Testis (tissue), 5 donors: ENCODE measurements at regions of chr16 and their contacts with region 1.

Region 1: GRCh38 chr16:67159593-67160406 is at the starts of genes FBXL8 and TRADD:
- DNase-seq: peak; percentile 74
- H3K4me3 ChIP-seq: peak within 1 kb of the TSS; percentile 75 to 87
- H3K27ac ChIP-seq: peak within 1 kb of the TSS; percentile 56 to 65
- H3K4me1 ChIP-seq: peaks cover 18% of the 10 kb centered on the region
- H3K27me3 ChIP-seq: no peaks in the 10 kb centered on the region
- CTCF ChIP-seq: peak in 2 of 3 experiments; percentile 20 to 46
- POLR2A ChIP-seq: no peak
- total RNA-seq, gene FBXL8: 20.6 to 26.9 TPM
- total RNA-seq, gene TRADD: 15.9 to 23.9 TPM

Region 2: DNA sequence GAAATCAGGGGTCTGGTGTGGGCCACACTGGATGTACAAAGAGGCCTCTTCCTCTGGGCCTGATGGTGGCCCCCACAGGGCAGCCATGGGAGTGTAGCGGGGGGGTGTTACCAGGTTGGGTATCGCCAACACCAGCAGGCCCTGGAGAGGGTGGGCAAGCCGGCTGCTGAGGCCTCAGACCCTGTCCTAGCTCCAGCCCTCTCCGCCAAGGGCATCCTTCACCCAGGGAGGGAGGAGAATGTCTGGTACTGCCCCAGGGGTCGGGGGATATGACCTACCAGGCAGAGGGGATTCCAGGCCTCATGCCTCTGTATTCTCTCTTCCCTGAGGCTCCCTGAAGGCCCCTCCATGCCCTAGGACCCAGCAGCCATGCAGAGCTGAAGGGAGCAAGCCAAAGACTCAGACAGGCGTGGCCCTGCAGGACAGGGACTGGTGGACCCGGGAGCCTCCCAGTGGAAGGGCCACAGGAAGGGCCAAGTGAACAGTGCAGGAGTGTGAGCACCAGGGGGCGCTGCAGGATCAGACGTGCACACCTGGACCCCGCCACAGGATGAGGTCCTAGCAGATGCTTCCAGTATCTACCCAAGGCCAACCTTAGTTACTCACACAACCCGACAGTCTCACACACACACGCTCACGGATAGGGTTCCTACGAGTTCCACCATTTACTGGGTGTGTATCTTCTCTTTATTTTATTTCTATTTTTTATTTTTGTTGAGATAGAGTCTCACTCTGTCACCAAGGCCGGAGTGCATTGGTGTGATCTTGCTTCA is 182.3 kb before region 1 on chr16:
- intact Hi-C with region 1: loop called (anchors 5 kb)
- DNase-seq: peak; percentile 94
- H3K4me3 ChIP-seq: no peak overlapping the region
- H3K27ac ChIP-seq: no peak overlapping the region
- H3K4me1 ChIP-seq: peaks cover 6% of the 10 kb centered on the region
- H3K27me3 ChIP-seq: no peaks in the 10 kb centered on the region
- CTCF ChIP-seq: peak; percentile 95 to 99 (median 98)
- POLR2A ChIP-seq: no peak